ENCODE measurements at regions of chr1 and their contacts with region 1.

Region 1: GRCh38 chr1:113811888-113812660 is at the start of gene RSBN1:
- H3K4me3 Mint-ChIP-seq: peak within 1 kb of the TSS; percentile 86
- H3K27ac Mint-ChIP-seq: peak within 1 kb of the TSS; percentile 92
- H3K4me1 Mint-ChIP-seq: peaks cover 18% of the 10 kb centered on the region
- H3K27me3 Mint-ChIP-seq: no peaks in the 10 kb centered on the region

Region 2: GRCh38 chr1:113759333-113760101 is 52.6 kb before region 1 on chr1 and contains the start of gene PHTF1:
- intact Hi-C with region 1: loop called (anchors 2 kb)
- H3K4me3 Mint-ChIP-seq: peak within 1 kb of the TSS; percentile 97
- H3K27ac Mint-ChIP-seq: peak within 1 kb of the TSS; percentile 89
- H3K4me1 Mint-ChIP-seq: peaks cover 27% of the 10 kb centered on the region
- H3K27me3 Mint-ChIP-seq: no peaks in the 10 kb centered on the region

Region 3: DNA sequence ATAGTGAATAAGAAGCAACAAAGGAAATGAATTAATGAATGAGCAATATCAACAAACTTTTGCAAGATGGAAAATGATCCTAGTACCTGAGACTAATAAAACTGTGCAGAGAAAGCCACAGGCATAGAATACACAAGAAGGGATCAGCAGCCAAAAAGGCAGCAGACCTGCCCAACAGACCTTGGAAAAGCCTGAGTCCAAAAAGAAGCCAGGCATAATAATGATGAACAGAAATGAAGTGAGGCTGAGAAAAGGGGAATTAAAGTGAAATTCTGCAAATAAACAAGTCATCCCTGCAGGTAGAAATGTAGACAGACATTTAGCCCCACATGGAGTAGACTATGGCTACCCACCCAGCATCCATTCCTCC is 42.5 kb before region 1 on chr1:
- intact Hi-C with region 1: no loop called
- H3K4me3 Mint-ChIP-seq: no peak overlapping the region
- H3K27ac Mint-ChIP-seq: no peak overlapping the region
- H3K4me1 Mint-ChIP-seq: peaks cover 7% of the 10 kb centered on the region
- H3K27me3 Mint-ChIP-seq: no peaks in the 10 kb centered on the region

Region 4: GRCh38 chr1:113928941-113929749 is 117.1 kb after region 1 on chr1 and contains the start of gene HIPK1:
- intact Hi-C with region 1: loop called (anchors 1 kb)
- H3K4me3 Mint-ChIP-seq: peak within 1 kb of the TSS; percentile 97
- H3K27ac Mint-ChIP-seq: peak within 1 kb of the TSS; percentile 98
- H3K4me1 Mint-ChIP-seq: peaks cover 69% of the 10 kb centered on the region
- H3K27me3 Mint-ChIP-seq: no peaks in the 10 kb centered on the region

Measured in dendritic cell treated with granulocyte-macrophage colony-stimulating factor and Interleukin-4, amounts not matched to agents 40 ng/mL and 50 ng/mL, for 4 days (primary cell).